Adrenal gland (tissue), 19 donors: ENCODE measurements at regions of chr12 and their contacts with region 1.

Region 1: GRCh38 chr12:105171691-105172436 is 64.1 kb downstream of the APPL2 start:
- DNase-seq: no peak
- H3K4me3 ChIP-seq: no peak overlapping the region
- H3K27ac ChIP-seq: no peak overlapping the region
- H3K4me1 ChIP-seq: no peaks in the 10 kb centered on the region
- H3K27me3 ChIP-seq: no peaks in the 10 kb centered on the region
- CTCF ChIP-seq: no peak
- POLR2A ChIP-seq: no peak

Region 2: GRCh38 chr12:105109465-105110212 is 62.2 kb before region 1 on chr12:
- intact Hi-C with region 1: loop called in 1 of 2 experiments (anchors 10 kb)
- DNase-seq: peak in 4 of 7 donors; percentile 10 to 33 (median 18)
- H3K4me3 ChIP-seq: peak overlapping the region in 1 of 4 donors; percentile 71
- H3K27ac ChIP-seq: peak overlapping the region in 4 of 5 donors; percentile 33 to 97 (median 96)
- H3K4me1 ChIP-seq: peaks cover 22 to 52% of the 10 kb centered on the region in 2 donors
- H3K27me3 ChIP-seq: no peaks in the 10 kb centered on the region
- CTCF ChIP-seq: no peak
- POLR2A ChIP-seq: no peak

Region 3: GRCh38 chr12:105120551-105120950 is 51.3 kb before region 1 on chr12:
- intact Hi-C with region 1: loop called (anchors 10 kb)
- DNase-seq: no peak
- H3K4me3 ChIP-seq: no peak overlapping the region
- H3K27ac ChIP-seq: no peak overlapping the region
- H3K4me1 ChIP-seq: no peaks in the 10 kb centered on the region
- H3K27me3 ChIP-seq: no peaks in the 10 kb centered on the region
- CTCF ChIP-seq: no peak
- POLR2A ChIP-seq: no peak